ENCODE measurements at regions of chr7 and their contacts with region 1.

Region 1: DNA sequence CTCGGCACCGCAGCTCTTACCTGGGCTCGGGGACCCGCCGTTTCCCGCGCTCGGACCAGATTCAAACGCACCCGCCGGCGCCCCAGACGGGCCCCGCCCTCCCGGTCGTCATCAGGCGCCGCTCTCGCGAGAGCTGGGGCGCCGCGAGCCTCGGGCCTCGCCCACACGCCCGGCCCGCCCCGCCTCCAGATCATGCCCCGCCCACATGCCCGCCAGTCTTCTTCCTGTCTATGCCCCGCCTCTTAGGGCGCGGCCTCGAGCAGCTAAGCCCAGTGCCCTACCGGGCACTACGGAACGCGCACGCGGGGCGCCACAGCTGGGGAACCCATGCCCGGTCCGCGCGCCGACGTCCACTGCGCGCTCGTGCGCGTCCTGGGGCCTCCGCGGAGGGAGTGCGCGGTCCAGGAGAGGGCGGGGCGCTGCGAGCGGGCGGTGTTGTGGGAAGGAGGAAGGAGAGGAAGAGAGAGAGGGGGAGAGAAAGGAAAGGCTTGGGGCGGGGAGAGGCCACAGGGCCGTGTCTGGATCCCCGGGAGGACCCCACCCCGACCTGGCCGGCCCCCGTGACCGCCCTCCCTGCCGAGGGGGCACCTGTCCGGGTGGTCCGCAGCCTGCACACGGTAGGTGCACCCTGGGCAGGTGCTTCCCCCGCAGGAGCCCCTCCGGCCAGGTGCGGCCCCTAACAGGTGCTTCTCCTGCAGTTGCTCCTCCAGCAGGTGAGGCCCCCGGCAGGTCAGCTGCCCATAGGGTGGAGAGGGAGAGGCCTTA is at the start of gene NCAPG2:
- DNase-seq: peak; percentile 100
- H3K4me3 ChIP-seq: peak within 1 kb of the TSS; percentile 95
- H3K27ac ChIP-seq: peak within 1 kb of the TSS; percentile 89
- H3K4me1 ChIP-seq: no peaks in the 10 kb centered on the region
- H3K27me3 ChIP-seq: no peaks in the 10 kb centered on the region
- CTCF ChIP-seq: no peak
- total RNA-seq, gene NCAPG2: 15.0 to 48.4 TPM

Region 2: GRCh38 chr7:158829342-158830210 is 124.7 kb after region 1 on chr7 and contains the start of gene ESYT2:
- intact Hi-C with region 1: loop called (anchors 5 kb)
- DNase-seq: peak; percentile 99
- H3K4me3 ChIP-seq: peak within 1 kb of the TSS; percentile 84
- H3K27ac ChIP-seq: peak within 1 kb of the TSS; percentile 99
- H3K4me1 ChIP-seq: peaks cover 3% of the 10 kb centered on the region
- H3K27me3 ChIP-seq: no peaks in the 10 kb centered on the region
- CTCF ChIP-seq: no peak
- total RNA-seq, gene ESYT2: 57.5 to 105 TPM

Region 3: DNA sequence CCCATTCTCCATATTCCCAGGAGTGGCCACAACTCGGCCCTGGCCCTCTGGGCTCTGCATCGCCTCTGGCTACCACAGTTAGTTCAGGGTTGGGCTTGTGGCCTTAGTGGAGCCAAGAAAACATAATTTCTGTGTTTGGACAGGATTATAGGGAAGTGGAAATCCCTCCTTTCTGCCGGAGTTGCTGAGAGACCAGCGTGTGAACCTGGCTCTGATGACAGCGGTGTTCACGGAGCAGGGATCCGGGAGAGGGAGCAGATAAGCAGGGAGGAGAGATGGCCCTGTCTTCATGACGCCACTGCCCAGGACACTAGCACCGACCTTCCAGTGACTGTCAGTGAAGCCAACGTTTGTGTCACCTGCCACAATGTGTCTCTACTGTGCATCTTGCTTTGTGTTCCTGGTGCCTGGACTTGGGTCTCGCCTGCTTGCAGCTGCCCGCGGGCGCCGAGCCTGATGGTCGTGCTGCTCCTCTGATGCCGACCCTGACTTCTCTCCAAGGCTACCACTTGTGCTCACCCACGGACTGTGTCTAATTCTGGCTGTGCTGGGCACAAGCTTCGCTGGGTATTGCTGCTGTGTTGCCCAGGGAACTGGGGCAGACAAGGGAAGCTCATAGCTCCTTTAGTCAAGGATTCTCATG is 506.8 kb after region 1 on chr7:
- intact Hi-C with region 1: no loop called
- DNase-seq: no peak
- H3K4me3 ChIP-seq: no peak overlapping the region
- H3K27ac ChIP-seq: no peak overlapping the region
- H3K4me1 ChIP-seq: no peaks in the 10 kb centered on the region
- H3K27me3 ChIP-seq: no peaks in the 10 kb centered on the region
- CTCF ChIP-seq: no peak

Measured in colonic mucosa (tissue), 4 donors.